Endothelial cell of umbilical vein (primary cell): ENCODE measurements at regions of chr2 and their contacts with region 1.

Region 1: DNA sequence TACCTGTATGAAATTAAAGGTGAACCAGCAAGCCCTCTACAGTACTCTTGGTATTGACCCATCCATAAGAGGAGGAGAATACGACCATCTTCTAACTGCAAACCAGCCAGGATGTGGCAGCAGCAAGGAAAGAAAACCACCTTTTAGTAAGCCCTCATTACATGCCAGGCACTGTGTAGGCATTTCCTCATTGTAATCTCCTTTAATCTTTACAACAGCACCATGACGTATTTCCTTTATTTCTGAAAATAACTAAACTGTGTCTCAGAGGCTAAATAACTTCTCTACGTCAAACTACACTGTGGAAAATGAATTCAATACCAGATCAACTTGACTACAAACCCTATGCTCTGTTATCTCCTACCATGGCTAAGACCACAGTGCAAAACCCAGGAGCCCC is 18.2 kb downstream of the WDR35 start:
- DNase-seq: peak; percentile 77
- H3K4me3 ChIP-seq: no peak overlapping the region
- H3K27ac ChIP-seq: peak overlapping the region; percentile 83
- H3K4me1 ChIP-seq: peaks cover 13% of the 10 kb centered on the region
- H3K27me3 ChIP-seq: no peaks in the 10 kb centered on the region
- CTCF ChIP-seq: no peak
- POLR2A ChIP-seq: no peak

Region 2: GRCh38 chr2:19933351-19933981 is 38.2 kb before region 1 on chr2:
- CTCF ChIA-PET with region 1: no interaction called
- POLR2A ChIA-PET with region 1: no interaction called
- dilution Hi-C with region 1: no loop called
- intact Hi-C with region 1: loop called (anchors 1 kb)
- DNase-seq: peak; percentile 92
- H3K4me3 ChIP-seq: peak overlapping the region in 2 of 3 experiments; percentile 7 to 66
- H3K27ac ChIP-seq: peak overlapping the region; percentile 99
- H3K4me1 ChIP-seq: peaks cover 28% of the 10 kb centered on the region
- H3K27me3 ChIP-seq: no peaks in the 10 kb centered on the region
- CTCF ChIP-seq: no peak
- POLR2A ChIP-seq: peak; percentile 74

Region 3: DNA sequence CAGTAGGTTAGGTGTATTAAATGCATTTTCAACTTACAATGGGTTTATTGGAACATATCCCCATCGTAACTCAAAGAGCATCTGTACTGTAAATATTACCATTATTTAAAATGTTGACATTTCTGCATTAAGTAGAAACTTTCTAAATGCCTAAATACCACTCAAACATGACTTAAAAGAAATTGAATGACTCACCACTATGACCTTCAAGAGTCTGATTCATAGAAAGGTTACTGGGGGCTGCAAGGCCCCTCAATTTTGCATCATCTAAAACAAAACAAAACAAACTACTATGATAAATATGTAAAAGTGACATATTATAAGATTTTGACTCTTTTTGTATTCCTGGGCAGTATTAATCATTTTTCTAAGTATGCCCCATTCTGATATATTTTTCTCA is 10.6 kb after region 1 on chr2:
- CTCF ChIA-PET with region 1: interaction called, 4 read pairs
- POLR2A ChIA-PET with region 1: no interaction called
- dilution Hi-C with region 1: no loop called
- intact Hi-C with region 1: loop called (anchors 1 kb)
- DNase-seq: peak; percentile 27
- H3K4me3 ChIP-seq: no peak overlapping the region
- H3K27ac ChIP-seq: no peak overlapping the region
- H3K4me1 ChIP-seq: peaks cover 32% of the 10 kb centered on the region
- H3K27me3 ChIP-seq: no peaks in the 10 kb centered on the region
- CTCF ChIP-seq: no peak
- POLR2A ChIP-seq: no peak

Region 4: DNA sequence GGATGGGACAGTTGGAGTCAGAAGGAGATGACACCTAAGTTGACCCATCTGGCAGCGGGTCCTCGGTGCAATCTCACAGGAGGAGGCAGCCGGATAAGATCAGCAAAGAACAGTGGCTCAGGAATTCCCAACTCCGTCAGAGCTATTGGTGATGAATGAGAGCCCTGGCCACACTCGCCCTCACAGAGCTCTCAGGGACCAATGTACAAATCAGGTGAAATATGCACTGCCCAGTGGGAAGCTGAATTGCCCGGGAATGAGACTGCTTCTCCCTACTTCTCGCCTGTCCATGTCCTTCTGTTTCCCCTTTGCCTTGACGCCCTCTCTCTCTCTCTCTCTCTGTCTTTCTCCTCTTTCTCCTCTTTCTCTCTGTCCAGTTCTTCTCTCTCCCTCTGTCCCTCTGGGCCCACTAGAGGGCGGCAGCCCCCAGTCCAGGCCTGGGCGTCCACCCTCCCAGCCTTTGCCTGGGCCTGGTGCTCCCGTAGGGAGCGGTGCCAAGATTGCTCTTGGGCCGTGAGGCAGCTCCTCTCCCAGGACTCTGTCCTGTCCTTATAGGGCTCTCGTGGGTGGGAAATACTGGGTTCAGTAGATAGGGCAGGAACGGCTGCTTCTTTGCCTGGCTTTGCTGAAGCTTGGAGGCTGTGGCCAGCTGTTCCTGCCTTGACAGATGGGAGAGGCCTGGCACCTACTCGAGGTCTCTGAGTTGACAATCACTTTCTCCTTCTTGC is 407.3 kb after region 1 on chr2:
- CTCF ChIA-PET with region 1: no interaction called
- POLR2A ChIA-PET with region 1: no interaction called
- dilution Hi-C with region 1: no loop called
- intact Hi-C with region 1: no loop called
- DNase-seq: peak; percentile 78
- H3K4me3 ChIP-seq: no peak overlapping the region
- H3K27ac ChIP-seq: no peak overlapping the region
- H3K4me1 ChIP-seq: no peaks in the 10 kb centered on the region
- H3K27me3 ChIP-seq: peaks cover 6 to 9% of the 10 kb centered on the region in 2 experiments
- CTCF ChIP-seq: peak; percentile 87 to 89
- POLR2A ChIP-seq: no peak